Dorsolateral prefrontal cortex (tissue), 120 donors: ENCODE measurements at regions of chr12 and their contacts with region 1.

Region 1: DNA sequence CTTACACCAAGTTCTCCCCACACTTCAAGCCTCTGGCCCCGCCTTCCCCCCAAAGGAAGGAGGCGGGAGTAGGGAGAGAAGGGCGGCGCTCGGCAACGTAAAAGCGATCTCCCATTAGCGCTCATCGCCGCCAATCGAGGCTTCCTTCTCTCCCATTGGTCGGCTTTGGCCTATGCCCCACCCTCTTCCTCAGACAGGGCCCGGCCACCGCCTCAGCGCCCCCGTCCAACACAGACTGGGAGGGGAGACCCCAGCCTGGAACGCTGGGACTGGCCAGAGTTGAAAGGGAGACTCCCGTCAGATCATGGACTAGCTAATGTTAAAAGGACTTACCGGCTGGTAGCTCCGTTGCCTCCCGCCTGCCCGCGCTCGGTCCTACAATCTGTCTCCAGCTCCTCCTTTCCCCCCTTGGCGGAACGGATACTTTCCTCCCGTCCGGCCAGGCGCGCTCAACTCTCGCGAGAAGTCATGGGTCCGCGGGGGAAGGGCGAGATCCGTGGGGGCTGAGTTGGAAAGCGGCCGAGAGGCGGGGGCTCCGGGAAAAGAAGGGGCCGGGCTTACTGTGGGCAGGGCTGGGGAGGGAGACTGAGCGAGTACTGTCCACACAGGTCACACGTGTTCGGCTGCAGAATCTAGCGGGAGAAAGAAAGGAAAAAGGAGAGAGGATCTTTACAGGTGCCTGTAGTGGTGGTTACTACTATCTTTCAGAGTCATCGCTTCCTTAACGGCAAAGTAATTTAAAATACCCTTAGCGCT is at the start of gene ATF7:
- DNase-seq: peak; percentile 95 to 99 (median 98)
- H3K4me3 ChIP-seq: peak within 1 kb of the TSS; percentile 62 to 94 (median 77)
- H3K27ac ChIP-seq: peak within 1 kb of the TSS; percentile 90 to 100 (median 97)
- H3K27me3 ChIP-seq: no peaks in the 10 kb centered on the region
- CTCF ChIP-seq: peak in 38 of 56 donors; percentile 4 to 64 (median 36)
- total RNA-seq, gene ATF7: 24.9 to 81.0 (median 39.7) TPM

Region 2: DNA sequence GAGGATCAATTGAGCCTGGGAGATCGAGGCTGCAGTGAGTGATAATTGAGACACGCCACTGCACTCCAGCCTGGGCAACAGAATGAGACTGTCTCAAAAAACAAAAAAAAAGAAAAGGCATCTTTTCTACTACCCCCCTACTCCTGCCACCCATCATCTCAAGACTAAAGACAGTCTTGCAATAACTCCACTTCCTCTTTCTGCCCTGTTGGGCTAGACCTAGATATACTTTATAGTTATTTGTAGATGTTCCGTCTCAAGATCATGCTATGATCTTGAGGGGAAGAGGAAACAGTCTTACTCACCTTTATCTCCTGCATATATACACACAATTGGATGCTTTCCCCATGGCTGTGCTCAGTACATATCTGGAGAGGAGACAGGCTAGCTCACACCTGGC is 370.1 kb before region 1 on chr12:
- intact Hi-C with region 1: no loop called
- DNase-seq: no peak
- H3K4me3 ChIP-seq: no peak overlapping the region
- H3K27ac ChIP-seq: no peak overlapping the region
- H3K27me3 ChIP-seq: no peaks in the 10 kb centered on the region
- CTCF ChIP-seq: no peak

Region 3: DNA sequence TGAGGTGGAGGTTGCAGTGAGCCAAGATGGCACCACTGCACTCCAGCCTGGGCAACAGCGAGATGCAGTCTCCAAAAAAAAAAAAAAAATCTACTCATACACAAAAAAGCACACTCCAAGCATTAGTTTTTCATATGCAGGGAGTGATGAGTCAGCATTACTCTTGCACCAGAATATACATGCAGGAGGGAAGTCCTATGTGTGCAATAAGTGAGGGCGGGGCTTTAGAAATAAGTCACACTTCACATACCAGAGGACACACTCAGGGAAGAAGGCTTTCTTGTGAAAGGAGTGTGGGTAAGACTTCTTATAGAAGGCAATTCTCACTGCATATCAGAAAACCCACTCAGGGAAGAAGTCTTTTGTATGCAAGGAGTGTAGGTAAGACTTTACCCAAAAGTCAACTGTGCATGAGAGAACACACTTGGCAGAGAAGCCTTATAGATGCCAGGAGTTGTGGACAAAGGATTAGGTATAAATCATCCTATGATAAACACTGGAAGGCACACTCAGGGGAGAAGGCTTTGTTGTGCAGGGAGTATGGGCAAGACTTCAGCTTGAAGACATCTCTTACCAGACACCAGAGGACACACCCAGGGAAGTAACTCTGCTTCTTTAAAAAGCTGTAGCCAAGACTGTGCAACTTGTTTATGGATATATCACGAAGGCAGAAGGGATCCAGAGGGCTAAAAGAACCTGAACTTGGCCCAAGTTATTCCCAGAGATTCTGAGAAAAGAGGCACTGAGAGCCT is 50.4 kb before region 1 on chr12:
- intact Hi-C with region 1: no loop called
- DNase-seq: no peak
- H3K4me3 ChIP-seq: no peak overlapping the region
- H3K27ac ChIP-seq: peak overlapping the region in 1 of 59 donors; percentile 12
- H3K27me3 ChIP-seq: no peaks in the 10 kb centered on the region
- CTCF ChIP-seq: no peak

Region 4: GRCh38 chr12:53603804-53604203 is 22.3 kb before region 1 on chr12:
- intact Hi-C with region 1: loop called in 1 of 2 experiments (anchors 2 kb)
- DNase-seq: peak in 1 of 10 donors; percentile 22
- H3K4me3 ChIP-seq: peak overlapping the region in 7 of 59 donors; percentile 1 to 33 (median 15)
- H3K27ac ChIP-seq: peak overlapping the region in 58 of 59 donors; percentile 77 to 98 (median 93)
- H3K27me3 ChIP-seq: no peaks in the 10 kb centered on the region
- CTCF ChIP-seq: peak in 1 of 56 donors; percentile 11

Region 5: GRCh38 chr12:53659011-53659551 is 33.0 kb after region 1 on chr12:
- intact Hi-C with region 1: loop called (anchors 1 kb)
- DNase-seq: peak in 9 of 10 donors; percentile 14 to 80 (median 67)
- H3K4me3 ChIP-seq: peak overlapping the region in 43 of 59 donors; percentile 0 to 52 (median 17)
- H3K27ac ChIP-seq: peak overlapping the region; percentile 87 to 100 (median 98)
- H3K27me3 ChIP-seq: no peaks in the 10 kb centered on the region
- CTCF ChIP-seq: peak in 23 of 56 donors; percentile 9 to 47 (median 21)

Region 6: DNA sequence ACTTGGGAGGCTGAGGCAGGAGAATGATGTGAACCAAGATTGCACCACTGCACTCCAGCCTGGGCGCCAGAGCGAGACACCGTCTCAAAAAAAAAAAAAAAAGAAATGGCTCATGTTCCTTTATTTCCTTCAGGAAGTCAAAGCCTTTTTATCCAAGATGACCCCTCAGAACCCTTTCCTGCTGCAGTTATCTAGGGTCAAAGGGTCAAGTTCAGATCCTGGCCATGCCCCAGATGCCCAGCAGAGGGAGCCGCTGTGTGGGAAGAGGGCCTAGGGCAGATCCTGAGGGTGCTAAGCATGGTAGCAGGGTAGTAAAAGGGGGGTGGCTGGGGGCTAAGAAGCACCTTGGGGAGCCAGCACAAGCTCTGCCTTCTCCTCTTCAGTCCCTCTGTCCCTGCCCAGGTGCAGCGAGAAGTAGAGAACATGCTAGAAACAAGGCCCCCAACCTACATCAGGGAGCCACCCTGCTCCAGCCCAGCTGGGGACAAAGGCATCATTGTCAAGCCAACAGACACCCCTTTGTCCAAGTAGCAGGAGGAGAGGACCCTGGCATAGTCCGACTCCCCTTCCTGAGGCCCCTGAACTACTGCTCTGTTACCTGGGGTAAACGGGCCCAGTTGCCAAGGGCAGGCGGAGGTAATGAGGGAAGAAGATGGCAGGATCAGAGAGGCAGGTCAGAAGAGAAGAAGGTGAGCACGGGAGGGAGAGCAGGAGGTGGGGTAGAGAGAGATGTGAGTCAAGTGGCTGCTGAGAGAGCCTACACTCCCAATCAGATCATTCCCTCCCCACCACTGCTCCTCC is 668.2 kb after region 1 on chr12:
- intact Hi-C with region 1: no loop called
- DNase-seq: peak in 7 of 10 donors; percentile 16 to 71 (median 52)
- H3K4me3 ChIP-seq: peak overlapping the region in 5 of 59 donors; percentile 4 to 20 (median 7)
- H3K27ac ChIP-seq: peak overlapping the region in 57 of 59 donors; percentile 16 to 93 (median 76)
- H3K27me3 ChIP-seq: peaks cover 0 to 15% (median 3%) of the 10 kb centered on the region in 45 donors
- CTCF ChIP-seq: peak in 55 of 56 donors; percentile 43 to 86 (median 67)